Panc1 (cell line): ENCODE measurements at regions of chr11 and their contacts with region 1.

Region 1: DNA sequence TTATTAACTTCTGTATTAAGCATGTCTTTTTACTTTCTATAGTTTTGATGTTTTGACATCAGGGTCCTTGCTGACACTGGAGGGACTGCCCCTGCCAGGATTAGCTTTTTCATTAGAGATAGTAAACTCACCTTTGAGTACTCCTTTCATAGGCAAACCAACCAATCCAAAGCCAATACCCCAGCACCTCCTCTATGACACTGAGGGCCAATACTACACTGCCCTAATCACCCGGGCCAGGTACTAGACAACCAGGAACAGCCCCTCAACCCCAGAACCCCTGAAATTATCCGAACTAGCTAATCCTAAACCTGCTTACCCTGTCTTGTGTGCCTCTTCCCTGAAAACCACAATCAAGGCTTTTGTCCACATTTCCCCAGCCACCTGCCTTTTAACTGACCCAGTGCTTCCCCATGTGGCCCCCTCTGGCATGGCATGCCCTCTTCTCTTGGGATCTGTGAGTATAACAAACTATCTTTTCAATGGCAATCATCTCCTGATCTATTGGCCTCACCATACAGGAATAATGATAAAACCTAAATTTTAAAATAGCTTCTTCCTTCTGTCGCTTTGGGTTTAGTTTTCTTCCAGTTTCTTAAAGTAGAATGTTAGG is 31.2 kb downstream of the RAB6A start:
- DNase-seq: no peak
- ATAC-seq: peak; percentile 66; the same call in 1 of the 2 replicates
- H3K4me3 ChIP-seq: no peak overlapping the region
- H3K27ac ChIP-seq: no peak overlapping the region
- H3K4me1 ChIP-seq: no peaks in the 10 kb centered on the region
- H3K27me3 ChIP-seq: no peaks in the 10 kb centered on the region
- CTCF ChIP-seq: no peak; the same call in none of the 2 replicates

Region 2: GRCh38 chr11:73446766-73447165 is 282.9 kb before region 1 on chr11:
- CTCF ChIA-PET with region 1: no interaction called
- POLR2A ChIA-PET with region 1: interaction called, 10 read pairs
- in situ Hi-C with region 1: no loop called
- intact Hi-C with region 1: no loop called
- DNase-seq: no peak
- ATAC-seq: no peak
- H3K4me3 ChIP-seq: no peak overlapping the region
- H3K27ac ChIP-seq: no peak overlapping the region
- H3K4me1 ChIP-seq: no peaks in the 10 kb centered on the region
- H3K27me3 ChIP-seq: no peaks in the 10 kb centered on the region
- CTCF ChIP-seq: no peak

Region 3: DNA sequence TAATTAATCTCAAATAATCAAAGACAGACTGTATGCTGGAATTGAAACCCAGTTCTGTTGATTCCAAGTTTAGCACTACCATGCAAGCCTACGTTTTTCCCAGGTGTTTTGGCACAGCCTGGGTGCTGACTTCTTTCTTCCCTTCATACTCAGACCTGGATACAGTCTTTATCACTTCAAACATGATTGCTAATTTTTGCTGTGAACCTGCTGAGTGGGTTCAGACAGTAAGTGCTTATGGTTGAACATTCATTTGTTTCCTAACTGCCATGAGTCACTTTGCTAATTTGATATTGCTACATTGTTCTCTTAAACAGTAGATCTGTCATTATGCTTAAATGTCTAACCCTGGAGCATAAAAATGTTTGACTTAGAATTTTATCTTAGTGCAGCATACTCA is 159.3 kb after region 1 on chr11:
- CTCF ChIA-PET with region 1: interaction called, 18 read pairs
- POLR2A ChIA-PET with region 1: no interaction called
- in situ Hi-C with region 1: no loop called
- intact Hi-C with region 1: no loop called
- DNase-seq: no peak
- ATAC-seq: no peak
- H3K4me3 ChIP-seq: no peak overlapping the region
- H3K27ac ChIP-seq: no peak overlapping the region
- H3K4me1 ChIP-seq: no peaks in the 10 kb centered on the region
- H3K27me3 ChIP-seq: no peaks in the 10 kb centered on the region
- CTCF ChIP-seq: no peak